Esophagus muscularis mucosa (tissue), 4 donors: ENCODE measurements at regions of chr19 and their contacts with region 1.

Region 1: DNA sequence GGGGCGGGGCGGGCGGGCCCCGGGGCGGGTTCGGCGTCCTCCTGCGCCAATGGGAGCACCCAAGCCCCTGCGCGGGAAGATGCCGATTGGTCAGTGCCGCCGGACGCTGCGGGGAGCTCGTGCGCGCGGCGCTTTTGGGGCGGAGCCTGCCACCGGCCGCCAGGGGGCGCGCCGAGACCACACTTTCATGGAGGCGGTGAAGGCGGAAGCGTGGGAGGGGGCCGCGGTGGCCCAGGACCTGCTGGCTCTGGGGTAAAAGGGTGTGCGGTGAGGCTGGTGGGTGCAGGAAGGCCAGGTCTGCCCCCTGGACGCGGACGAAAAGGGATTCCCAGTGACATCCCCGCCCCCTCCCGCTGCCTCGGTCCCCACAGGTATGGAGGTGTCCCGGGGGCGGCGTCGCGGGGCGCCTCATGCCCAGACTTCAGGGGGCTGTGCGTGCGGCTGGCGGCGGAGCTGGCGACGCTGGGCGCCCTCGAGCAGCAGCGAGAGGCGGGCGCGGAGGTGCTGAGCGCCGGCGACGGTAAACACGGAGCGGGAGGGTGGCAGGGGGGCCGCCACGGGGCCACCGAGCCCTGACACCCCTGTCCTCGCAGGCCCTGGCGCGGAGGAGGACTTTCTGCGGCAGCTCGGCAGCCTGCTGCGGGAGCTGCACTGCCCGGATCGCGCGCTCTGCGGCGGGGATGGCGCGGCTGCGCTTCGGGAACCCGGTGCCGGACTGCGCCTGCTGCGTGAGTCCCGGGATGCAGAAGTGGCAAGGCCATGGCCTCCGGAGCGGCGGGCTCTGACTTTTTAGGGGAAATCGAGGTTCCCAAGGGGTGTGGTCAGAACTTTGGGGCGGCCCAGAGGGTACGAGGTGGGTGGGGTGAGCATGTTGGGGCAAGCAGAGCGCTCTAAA is at the start of gene FAM98C:
- DNase-seq: peak; percentile 100
- H3K4me3 ChIP-seq: peak within 1 kb of the TSS; percentile 77 to 98 (median 92)
- H3K27ac ChIP-seq: peak within 1 kb of the TSS; percentile 79 to 84 (median 83)
- H3K4me1 ChIP-seq: peaks cover 5 to 20% (median 16%) of the 10 kb centered on the region in 4 donors
- H3K27me3 ChIP-seq: peaks cover 0 to 36% (median 22%) of the 10 kb centered on the region in 4 donors
- CTCF ChIP-seq: peak; percentile 97 to 99 (median 98)
- EP300 ChIP-seq: no peak
- POLR2A ChIP-seq: no peak
- total RNA-seq, gene FAM98C: 16.2 to 22.0 (median 19.7) TPM

Region 2: GRCh38 chr19:38514812-38515633 is 111.8 kb after region 1 on chr19:
- intact Hi-C with region 1: loop called (anchors 5 kb)
- DNase-seq: peak; percentile 94
- H3K4me3 ChIP-seq: peak overlapping the region in 2 of 4 donors; percentile 12 to 18
- H3K27ac ChIP-seq: no peak overlapping the region
- H3K4me1 ChIP-seq: peaks cover 0 to 10% (median 8%) of the 10 kb centered on the region in 4 donors
- H3K27me3 ChIP-seq: peaks cover 0 to 12% (median 0%) of the 10 kb centered on the region in 4 donors
- CTCF ChIP-seq: peak; percentile 67 to 92 (median 78)
- EP300 ChIP-seq: no peak
- POLR2A ChIP-seq: no peak

Region 3: GRCh38 chr19:38618590-38619360 is 215.6 kb after region 1 on chr19 and contains the start of gene EIF3K:
- intact Hi-C with region 1: loop called (anchors 5 kb)
- DNase-seq: peak; percentile 99
- H3K4me3 ChIP-seq: peak within 1 kb of the TSS; percentile 71 to 91 (median 82)
- H3K27ac ChIP-seq: peak within 1 kb of the TSS; percentile 87 to 92 (median 87)
- H3K4me1 ChIP-seq: peaks cover 21 to 31% (median 23%) of the 10 kb centered on the region in 4 donors
- H3K27me3 ChIP-seq: no peaks in the 10 kb centered on the region
- CTCF ChIP-seq: peak in 2 of 3 experiments; percentile 11 to 40
- EP300 ChIP-seq: no peak
- POLR2A ChIP-seq: peak; percentile 68
- total RNA-seq, gene EIF3K: 333 to 570 (median 446) TPM

Region 4: DNA sequence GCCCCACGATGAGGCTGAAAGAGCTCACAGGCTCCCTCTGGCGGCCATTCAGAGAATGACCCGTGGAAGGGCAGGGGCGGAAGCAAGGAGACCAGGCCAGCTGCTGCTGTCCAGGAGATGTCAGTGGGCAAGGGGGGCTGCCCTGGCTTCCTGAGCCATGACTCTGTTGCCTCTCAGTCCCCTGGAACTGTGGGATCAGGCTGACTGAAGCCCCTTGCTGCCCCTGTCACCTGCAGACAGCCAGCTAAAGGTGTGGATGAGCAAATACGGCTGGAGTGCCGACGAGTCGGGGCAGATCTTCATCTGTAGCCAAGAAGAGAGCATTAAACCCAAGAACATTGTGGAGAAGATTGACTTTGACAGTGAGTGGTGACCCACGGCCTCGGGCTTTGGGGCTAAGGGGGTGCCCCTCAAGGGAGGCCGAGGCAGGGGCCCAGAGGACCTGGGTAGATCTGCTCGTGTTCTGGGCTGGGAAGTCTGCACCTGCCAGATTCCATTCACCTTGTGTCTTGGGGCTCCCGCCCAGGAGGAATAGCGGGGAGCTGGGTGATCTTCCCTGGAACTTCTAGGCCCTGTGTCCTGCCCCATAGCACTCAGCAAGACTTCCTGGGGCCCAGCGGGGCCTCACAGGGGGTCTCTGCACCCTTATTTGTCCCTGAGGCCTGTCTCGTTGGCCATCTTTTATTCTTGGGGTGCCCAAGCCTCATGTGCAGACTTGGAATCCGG is 231.7 kb after region 1 on chr19:
- intact Hi-C with region 1: loop called (anchors 2 kb)
- DNase-seq: no peak
- H3K4me3 ChIP-seq: no peak overlapping the region
- H3K27ac ChIP-seq: peak overlapping the region; percentile 39 to 67 (median 54)
- H3K4me1 ChIP-seq: peaks cover 18 to 32% (median 25%) of the 10 kb centered on the region in 4 donors
- H3K27me3 ChIP-seq: no peaks in the 10 kb centered on the region
- CTCF ChIP-seq: peak in 2 of 3 experiments; percentile 94
- EP300 ChIP-seq: no peak
- POLR2A ChIP-seq: no peak

Region 5: DNA sequence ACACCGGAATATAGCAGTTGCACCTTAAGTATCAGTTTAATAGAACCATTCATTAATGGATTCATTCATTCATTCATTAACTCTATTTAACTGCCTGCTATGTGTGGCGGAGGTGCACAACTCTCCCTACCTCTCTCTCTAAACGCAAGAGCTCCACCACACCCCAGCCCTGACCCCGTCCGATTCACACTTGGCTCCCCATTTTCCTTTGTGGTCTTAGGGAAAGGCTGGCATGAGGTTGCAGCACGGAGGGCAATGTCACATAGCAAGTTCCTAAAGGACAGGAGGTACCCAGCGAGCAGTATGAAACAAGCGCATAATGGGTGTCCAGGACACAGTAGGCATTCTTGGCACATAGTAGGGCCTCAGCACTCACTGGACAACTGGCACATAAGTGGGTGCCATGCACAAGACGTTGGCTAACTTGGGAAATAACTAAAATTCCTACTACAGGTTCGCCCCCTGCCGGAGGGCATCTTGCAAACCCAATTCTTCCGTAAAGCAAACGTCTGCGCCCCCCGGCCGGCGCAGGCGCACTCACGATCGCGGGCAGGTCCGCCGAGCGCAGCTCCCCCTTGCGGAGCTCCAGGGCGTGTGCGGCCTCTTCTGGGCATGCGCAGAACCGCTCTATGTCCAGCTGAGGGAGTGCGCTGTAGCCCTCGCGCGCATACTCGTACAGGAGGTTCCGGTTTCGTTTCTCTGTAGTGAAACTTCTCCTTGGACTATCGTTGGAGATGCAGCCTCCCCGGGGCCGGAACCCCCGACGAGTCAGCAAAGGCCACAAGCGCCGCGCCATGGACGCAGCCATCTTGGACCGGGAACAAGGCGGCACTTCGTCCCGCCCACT is 526.9 kb after region 1 on chr19 and contains the start of gene SARS2:
- intact Hi-C with region 1: loop called (anchors 5 kb)
- DNase-seq: peak; percentile 99
- H3K4me3 ChIP-seq: peak within 1 kb of the TSS; percentile 65 to 75 (median 68)
- H3K27ac ChIP-seq: peak within 1 kb of the TSS; percentile 85 to 90 (median 88)
- H3K4me1 ChIP-seq: peaks cover 29 to 33% (median 31%) of the 10 kb centered on the region in 4 donors
- H3K27me3 ChIP-seq: no peaks in the 10 kb centered on the region
- CTCF ChIP-seq: peak in 2 of 3 experiments; percentile 100
- EP300 ChIP-seq: no peak
- POLR2A ChIP-seq: no peak
- total RNA-seq, gene SARS2: 6.8 to 14.6 (median 9.1) TPM